OCI-LY7 (cell line): ENCODE measurements at regions of chr11 and their contacts with region 1.

Region 1: GRCh38 chr11:130002846-130003716 is 446 bp upstream of the PRDM10 start:
- DNase-seq: peak; percentile 99
- H3K4me3 ChIP-seq: peak overlapping the region; percentile 91
- H3K27ac ChIP-seq: peak overlapping the region; percentile 89
- H3K4me1 ChIP-seq: peaks cover 67% of the 10 kb centered on the region
- CTCF ChIP-seq: no peak; the same call in 1 of the 2 replicates

Region 2: GRCh38 chr11:129950101-129951091 is 52.7 kb before region 1 on chr11:
- CTCF ChIA-PET with region 1: interaction called, 4 read pairs
- POLR2A ChIA-PET with region 1: interaction called, 88 read pairs
- intact Hi-C with region 1: loop called (anchors 1 kb)
- DNase-seq: peak; percentile 76
- H3K4me3 ChIP-seq: peak overlapping the region; percentile 45
- H3K27ac ChIP-seq: peak overlapping the region; percentile 91
- H3K4me1 ChIP-seq: peaks cover 56% of the 10 kb centered on the region
- CTCF ChIP-seq: no peak

Region 3: DNA sequence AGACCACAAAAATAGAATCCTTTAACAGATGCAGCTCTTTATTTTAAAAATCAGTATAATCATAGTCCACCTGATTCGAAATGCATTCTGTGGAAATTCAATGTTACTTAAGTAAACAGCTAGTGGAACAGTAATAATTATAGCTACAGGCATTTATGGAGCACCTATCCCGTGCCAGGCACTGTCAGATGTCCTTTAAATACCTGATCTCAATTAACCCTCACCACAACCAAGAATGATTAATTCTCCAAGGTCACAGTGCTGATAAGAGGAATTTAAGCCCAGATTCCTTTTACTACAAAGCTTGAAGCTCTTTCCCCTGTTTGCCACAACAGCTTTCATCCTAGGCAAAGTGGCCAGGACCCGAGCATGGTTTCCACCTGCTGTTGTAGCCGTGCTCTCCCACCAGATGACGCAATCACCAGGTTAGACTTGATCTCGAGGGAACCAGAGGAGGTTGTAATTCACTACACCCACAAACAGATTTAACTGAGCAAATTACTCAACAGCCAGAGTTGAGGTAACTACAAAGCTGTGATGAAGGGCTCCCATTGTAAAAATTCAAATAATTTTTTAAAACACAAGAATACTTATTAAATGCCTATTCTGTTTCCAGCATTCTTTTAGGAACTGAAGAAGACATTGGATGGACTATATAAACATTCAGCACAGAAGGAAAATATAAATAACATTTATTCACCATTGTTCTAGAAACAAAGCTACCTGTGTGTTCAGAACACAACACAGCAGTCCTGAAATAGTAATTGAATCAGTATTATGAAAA is 10.7 kb before region 1 on chr11:
- CTCF ChIA-PET with region 1: interaction called, 3 read pairs
- POLR2A ChIA-PET with region 1: interaction called, 35 read pairs
- intact Hi-C with region 1: no loop called
- DNase-seq: peak; percentile 91
- H3K4me3 ChIP-seq: no peak overlapping the region
- H3K27ac ChIP-seq: peak overlapping the region; percentile 45
- H3K4me1 ChIP-seq: peaks cover 56% of the 10 kb centered on the region
- CTCF ChIP-seq: peak; percentile 92

Region 4: GRCh38 chr11:130034236-130034635 is 31.2 kb after region 1 on chr11:
- CTCF ChIA-PET with region 1: no interaction called
- POLR2A ChIA-PET with region 1: interaction called, 13 read pairs
- intact Hi-C with region 1: no loop called
- DNase-seq: no peak
- H3K4me3 ChIP-seq: no peak overlapping the region
- H3K27ac ChIP-seq: no peak overlapping the region
- H3K4me1 ChIP-seq: peaks cover 22% of the 10 kb centered on the region
- CTCF ChIP-seq: no peak

Region 5: GRCh38 chr11:130118636-130119387 is 115.7 kb after region 1 on chr11:
- CTCF ChIA-PET with region 1: no interaction called
- POLR2A ChIA-PET with region 1: interaction called, 34 read pairs
- intact Hi-C with region 1: loop called (anchors 1 kb)
- DNase-seq: peak; percentile 83
- H3K4me3 ChIP-seq: peak overlapping the region; percentile 61
- H3K27ac ChIP-seq: peak overlapping the region; percentile 90
- H3K4me1 ChIP-seq: peaks cover 89% of the 10 kb centered on the region
- CTCF ChIP-seq: no peak

Region 6: GRCh38 chr11:130181295-130182272 is 178.5 kb after region 1 on chr11:
- CTCF ChIA-PET with region 1: no interaction called
- POLR2A ChIA-PET with region 1: interaction called, 12 read pairs
- intact Hi-C with region 1: loop called (anchors 2 kb)
- DNase-seq: peak; percentile 98
- H3K4me3 ChIP-seq: peak overlapping the region; percentile 64
- H3K27ac ChIP-seq: peak overlapping the region; percentile 99
- H3K4me1 ChIP-seq: peaks cover 96% of the 10 kb centered on the region
- CTCF ChIP-seq: peak; percentile 35; the same call in 1 of the 2 replicates